Right ventricle myocardium inferior (tissue), 1 donor: ENCODE measurements at regions of chr13 and their contacts with region 1.

Region 1: GRCh38 chr13:31310786-31311185 is 111.0 kb downstream of the B3GLCT start:
- DNase-seq: peak; percentile 66
- ATAC-seq: peak; percentile 96

Region 2: DNA sequence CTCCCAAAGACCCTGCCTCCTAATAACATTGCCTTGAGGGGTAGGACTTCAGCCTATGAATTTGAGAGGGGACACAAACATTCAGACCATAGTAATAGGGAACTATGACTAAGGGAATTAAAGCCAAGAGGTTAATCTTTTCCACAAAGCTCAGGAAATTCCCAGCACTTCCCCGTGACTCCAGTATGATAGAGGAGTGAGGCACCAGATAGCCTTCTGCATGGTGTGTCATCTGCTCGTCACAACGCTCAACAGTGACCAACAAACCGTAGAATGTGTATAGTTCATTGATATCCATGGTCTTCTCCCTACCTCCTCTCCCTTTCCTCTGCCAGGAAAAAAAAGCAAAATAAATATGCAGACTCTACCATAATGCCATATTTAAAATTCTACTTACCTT is 46.6 kb before region 1 on chr13:
- intact Hi-C with region 1: loop called (anchors 5 kb)
- DNase-seq: no peak
- ATAC-seq: no peak

Region 3: DNA sequence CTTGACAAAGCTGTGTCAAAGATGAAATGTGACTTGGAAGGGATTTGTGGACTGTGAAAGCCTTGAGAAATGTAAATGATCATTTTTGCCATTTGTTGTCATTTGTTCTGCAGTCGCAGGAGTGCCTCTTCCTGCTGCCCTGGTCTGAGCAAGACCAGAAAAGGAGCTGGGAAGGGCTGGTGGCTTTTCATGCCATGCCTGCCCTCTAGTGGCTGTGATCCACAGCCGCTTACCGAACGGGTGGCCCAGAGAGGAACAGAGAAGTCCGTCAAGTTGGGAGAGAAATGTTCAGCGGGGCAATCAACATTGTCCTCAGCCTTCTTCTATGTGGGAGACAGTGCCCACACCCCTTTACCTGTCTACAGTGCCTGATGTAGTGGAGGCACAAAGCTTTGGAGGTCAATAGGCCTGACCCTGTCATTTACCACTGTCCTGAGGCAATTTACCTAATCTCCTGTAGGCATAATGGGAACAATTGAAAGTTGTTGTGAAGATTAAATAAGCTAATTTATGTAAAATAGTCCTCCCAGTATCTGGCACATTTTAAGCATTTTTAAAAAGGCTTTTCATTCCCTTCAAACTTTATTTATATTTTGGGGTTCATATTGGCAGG is 113.4 kb after region 1 on chr13:
- intact Hi-C with region 1: loop called (anchors 5 kb)
- DNase-seq: peak; percentile 81
- ATAC-seq: peak; percentile 94